Calu3 (cell line): ENCODE measurements at regions of chr1 and their contacts with region 1.

Region 1: DNA sequence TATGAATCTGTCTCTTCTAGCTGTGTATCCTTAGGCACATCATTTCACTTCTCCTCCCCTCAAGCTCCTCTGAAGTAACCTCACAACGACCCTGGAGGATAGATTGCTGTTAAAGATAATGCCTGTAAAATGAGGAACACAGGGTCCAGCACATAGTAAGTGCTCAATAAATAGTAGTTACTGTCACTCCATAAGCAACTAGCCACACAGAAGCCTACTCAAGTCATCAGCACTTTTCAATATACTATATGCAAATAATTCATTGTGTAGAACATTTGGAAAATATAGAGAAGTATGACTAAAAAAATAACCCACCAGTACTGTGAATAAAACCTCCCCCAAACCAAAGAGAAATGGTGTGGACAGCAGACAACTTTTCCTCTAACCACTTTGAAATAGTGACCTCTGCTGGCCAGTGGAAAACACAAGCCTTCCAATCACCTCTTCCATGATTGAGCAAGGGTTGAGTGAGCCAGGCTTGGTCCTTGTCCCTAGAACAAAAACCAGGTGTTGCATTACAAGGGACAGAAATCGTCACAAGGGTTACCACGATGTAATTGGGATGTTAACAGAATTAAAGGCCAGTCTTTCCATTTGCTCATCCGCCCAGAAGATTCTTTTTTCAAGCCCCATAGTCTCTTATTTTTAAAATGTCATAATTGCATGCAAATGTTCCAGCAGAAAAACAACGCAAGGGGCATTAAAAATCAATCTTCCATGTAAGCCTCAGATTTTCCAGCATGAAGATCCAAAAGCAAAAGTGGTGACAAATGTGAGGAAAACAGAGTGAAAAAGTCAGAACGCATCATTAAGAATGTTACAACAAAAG is 15.7 kb upstream of the GLIS1 start:
- DNase-seq: peak; percentile 46
- H3K4me3 Mint-ChIP-seq: no peak overlapping the region
- H3K27ac Mint-ChIP-seq: no peak overlapping the region
- H3K4me1 Mint-ChIP-seq: no peaks in the 10 kb centered on the region
- H3K27me3 Mint-ChIP-seq: peaks cover 32% of the 10 kb centered on the region
- CTCF ChIP-seq: peak; percentile 78

Region 2: DNA sequence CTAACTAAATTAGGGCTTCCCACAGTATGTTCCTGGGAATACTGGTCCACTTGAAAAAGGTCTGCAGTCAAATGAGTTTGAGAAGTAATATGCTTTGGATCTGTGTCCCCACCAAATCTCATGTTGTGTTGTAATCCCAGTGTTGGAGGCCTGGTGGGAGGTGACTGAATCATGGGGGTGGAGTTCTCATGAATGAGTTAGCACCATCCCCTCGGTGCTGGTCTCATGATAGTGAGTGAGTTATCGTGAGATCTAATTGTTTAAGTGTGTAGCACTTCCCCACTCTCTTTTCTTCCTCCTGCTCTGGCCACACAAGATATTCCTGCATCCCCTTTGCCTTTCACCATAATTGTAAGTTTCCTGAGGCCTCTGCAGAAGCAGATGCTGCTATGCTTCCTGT is 312.4 kb before region 1 on chr1:
- CTCF ChIA-PET with region 1: no interaction called
- intact Hi-C with region 1: loop called (anchors 10 kb)
- DNase-seq: no peak
- H3K4me3 Mint-ChIP-seq: no peak overlapping the region
- H3K27ac Mint-ChIP-seq: no peak overlapping the region
- H3K4me1 Mint-ChIP-seq: peaks cover 7% of the 10 kb centered on the region
- H3K27me3 Mint-ChIP-seq: peaks cover 17% of the 10 kb centered on the region
- CTCF ChIP-seq: no peak

Region 3: DNA sequence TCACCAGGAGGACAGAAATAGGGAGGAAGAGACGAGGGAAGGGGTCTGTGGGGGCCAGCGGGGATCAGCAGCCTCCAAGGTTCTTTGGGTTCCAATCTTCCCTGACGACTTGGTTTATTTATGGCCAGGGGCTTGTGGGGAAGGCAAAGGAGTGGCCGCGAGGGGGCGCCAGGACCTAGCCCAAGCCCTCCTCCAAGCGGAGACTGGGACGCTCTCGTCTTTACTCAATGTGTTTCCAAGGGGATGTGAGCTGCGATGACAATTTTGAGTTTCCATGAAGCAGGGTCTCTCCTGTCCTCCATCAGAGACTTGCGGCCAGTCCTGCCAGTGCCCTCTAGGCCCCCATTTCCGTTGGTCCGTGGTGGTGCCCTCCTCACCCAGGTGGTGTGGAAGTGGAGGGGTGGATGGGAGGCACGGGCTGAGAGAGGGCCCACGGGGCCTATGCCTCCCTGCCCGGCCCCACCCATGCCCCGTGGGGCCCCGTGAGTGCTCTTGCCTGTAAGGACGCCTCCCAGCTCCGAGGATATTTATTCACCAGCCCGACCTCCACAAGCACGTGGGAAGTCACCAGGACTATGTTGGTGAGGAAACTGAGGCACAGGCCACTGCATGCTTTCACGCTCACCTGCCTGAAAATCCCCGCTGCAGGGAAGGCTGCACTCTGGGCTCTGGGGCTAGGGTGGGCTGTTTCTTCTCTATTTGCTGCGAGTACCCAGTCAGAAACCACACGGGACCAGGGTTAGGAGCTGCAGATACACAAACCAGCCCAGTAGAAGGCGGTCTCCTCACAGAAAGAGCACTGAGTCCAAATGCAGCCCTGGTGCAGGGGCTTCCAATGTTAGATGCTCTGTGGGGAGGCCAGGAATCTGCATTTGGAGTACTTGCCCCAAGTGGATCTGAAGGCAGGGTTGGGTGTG is 269.0 kb before region 1 on chr1:
- CTCF ChIA-PET with region 1: no interaction called
- intact Hi-C with region 1: loop called (anchors 1 kb)
- DNase-seq: peak; percentile 85
- H3K4me3 Mint-ChIP-seq: no peak overlapping the region
- H3K27ac Mint-ChIP-seq: no peak overlapping the region
- H3K4me1 Mint-ChIP-seq: peaks cover 9% of the 10 kb centered on the region
- H3K27me3 Mint-ChIP-seq: peaks cover 100% of the 10 kb centered on the region
- CTCF ChIP-seq: peak; percentile 89

Region 4: DNA sequence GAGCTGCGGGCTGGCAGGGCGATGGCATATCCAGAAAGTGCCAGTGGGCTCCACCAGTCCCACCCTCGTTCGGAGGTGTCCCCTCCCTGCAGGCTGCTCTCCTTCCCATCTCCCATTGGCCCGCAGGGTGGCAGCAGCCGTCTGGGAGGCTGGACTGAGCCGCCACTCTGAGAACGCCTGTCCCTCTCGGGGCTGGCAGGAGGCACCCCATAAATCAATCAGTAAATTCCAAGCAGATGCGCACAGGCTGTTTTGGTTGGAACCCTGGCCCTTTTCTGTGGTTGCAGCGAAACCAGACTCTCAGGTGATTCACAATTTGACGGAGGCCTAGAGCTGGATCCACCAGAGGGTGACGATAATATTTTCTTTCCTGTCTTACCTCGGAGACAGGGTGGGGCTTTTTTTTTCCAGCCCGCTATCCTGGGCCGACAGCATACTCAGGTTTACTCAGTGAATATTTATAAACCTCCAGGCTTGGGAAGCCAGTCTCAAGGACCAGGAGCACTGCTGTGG is 115.4 kb before region 1 on chr1:
- CTCF ChIA-PET with region 1: no interaction called
- intact Hi-C with region 1: loop called (anchors 5 kb)
- DNase-seq: peak; percentile 34
- H3K4me3 Mint-ChIP-seq: no peak overlapping the region
- H3K27ac Mint-ChIP-seq: no peak overlapping the region
- H3K4me1 Mint-ChIP-seq: no peaks in the 10 kb centered on the region
- H3K27me3 Mint-ChIP-seq: peaks cover 81% of the 10 kb centered on the region
- CTCF ChIP-seq: no peak